B cell (primary cell): ENCODE measurements at regions of chr1 and their contacts with region 1.

Region 1: GRCh38 chr1:160251687-160252526 is 10.4 kb downstream of the DCAF8 start:
- DNase-seq: peak; percentile 73
- ATAC-seq: peak; percentile 95
- H3K4me3 ChIP-seq: no peak overlapping the region
- H3K4me3 Mint-ChIP-seq: no peak overlapping the region
- H3K27ac ChIP-seq: peak overlapping the region in 1 of 2 donors; percentile 3
- H3K27ac Mint-ChIP-seq: no peak overlapping the region
- H3K4me1 ChIP-seq: no peaks in the 10 kb centered on the region
- H3K4me1 Mint-ChIP-seq: peaks cover 10% of the 10 kb centered on the region
- H3K27me3 ChIP-seq: no peaks in the 10 kb centered on the region
- H3K27me3 Mint-ChIP-seq: no peaks in the 10 kb centered on the region
- CTCF ChIP-seq: peak; percentile 85

Region 2: DNA sequence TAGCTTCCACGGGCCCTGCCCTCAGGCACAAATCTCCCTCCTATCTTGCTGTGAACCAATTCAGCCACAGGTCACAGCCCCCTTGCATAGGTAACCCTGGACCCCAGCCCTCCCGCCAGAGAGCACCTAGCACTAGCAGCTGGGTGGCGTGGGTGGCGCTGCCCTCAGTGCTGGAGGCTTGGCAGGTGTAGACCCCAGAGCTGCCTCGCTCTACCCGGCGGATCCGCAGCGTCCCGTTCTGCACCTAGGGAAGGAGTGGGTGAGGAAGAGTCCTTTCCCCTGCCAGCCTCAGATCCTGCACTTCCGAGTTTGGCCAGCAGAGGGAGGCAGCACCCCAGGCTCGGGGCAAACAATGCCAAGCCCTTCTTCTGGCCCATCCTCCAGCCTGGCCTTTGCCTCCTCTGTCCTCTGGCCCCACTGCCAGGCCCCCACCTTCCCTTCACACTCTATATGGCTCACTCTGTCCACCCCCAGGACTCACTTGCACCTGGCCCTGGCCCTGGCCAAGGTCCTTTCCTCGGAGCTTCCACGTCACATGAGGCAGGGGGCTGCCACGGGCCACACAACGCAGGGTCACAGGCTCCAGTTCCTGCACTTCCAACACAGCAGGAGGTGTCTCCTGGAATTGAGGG is 315.5 kb before region 1 on chr1:
- CTCF ChIA-PET with region 1: no interaction called
- POLR2A ChIA-PET with region 1: no interaction called
- intact Hi-C with region 1: loop called (anchors 5 kb)
- DNase-seq: peak; percentile 85
- ATAC-seq: peak; percentile 89
- H3K4me3 ChIP-seq: peak overlapping the region in 1 of 5 experiments; percentile 17
- H3K4me3 Mint-ChIP-seq: peak overlapping the region; percentile 49
- H3K27ac ChIP-seq: no peak overlapping the region
- H3K27ac Mint-ChIP-seq: peak overlapping the region; percentile 61
- H3K4me1 ChIP-seq: peaks cover 37 to 43% of the 10 kb centered on the region in 2 donors
- H3K4me1 Mint-ChIP-seq: peaks cover 47% of the 10 kb centered on the region
- H3K27me3 ChIP-seq: no peaks in the 10 kb centered on the region
- H3K27me3 Mint-ChIP-seq: peaks cover 4% of the 10 kb centered on the region
- CTCF ChIP-seq: peak; percentile 96

Region 3: DNA sequence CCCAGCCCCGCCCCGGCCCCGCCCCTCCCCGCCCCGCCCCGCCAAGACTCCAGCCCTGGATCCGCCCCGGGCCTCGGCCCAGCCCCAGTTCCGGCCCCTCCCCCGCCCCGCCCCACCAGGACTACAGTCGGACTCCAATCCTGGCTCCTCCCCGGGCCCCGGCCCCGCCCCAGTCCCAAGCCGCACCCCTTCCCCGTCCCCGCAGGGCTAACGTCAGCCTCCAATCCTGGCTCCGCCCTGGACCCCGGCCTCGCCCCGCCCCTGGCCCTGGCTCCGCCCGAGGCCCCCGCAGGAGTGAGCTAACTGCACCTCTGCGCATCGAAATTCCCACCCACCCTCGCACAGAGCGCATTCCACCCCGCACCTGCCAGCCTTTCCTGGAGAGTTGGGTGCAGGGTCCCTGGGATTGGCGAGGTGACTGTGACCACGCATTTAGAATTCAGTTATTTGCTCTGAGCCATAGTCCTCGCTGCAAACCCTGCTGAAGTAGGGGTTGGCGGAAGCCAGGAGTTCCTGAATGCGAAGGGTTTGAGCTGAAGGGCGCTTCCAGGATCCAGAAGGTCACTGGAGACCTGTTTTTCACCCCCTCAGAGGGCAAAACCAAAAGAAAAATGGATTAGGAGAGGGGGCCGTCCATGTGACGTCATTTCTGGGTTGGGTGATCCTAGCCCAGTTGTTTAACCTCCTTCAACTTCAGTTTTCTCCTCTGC is 152.9 kb before region 1 on chr1:
- CTCF ChIA-PET with region 1: interaction called, 84 read pairs
- POLR2A ChIA-PET with region 1: interaction called, 7 read pairs
- intact Hi-C with region 1: loop called (anchors 1 kb)
- DNase-seq: peak; percentile 96
- ATAC-seq: peak; percentile 91
- H3K4me3 ChIP-seq: peak overlapping the region; percentile 63 to 79 (median 72)
- H3K4me3 Mint-ChIP-seq: peak overlapping the region; percentile 88
- H3K27ac ChIP-seq: peak overlapping the region; percentile 95 to 99
- H3K27ac Mint-ChIP-seq: peak overlapping the region; percentile 86
- H3K4me1 ChIP-seq: peaks cover 33 to 45% of the 10 kb centered on the region in 2 donors
- H3K4me1 Mint-ChIP-seq: peaks cover 47% of the 10 kb centered on the region
- H3K27me3 ChIP-seq: no peaks in the 10 kb centered on the region
- H3K27me3 Mint-ChIP-seq: no peaks in the 10 kb centered on the region
- CTCF ChIP-seq: no peak

Region 4: DNA sequence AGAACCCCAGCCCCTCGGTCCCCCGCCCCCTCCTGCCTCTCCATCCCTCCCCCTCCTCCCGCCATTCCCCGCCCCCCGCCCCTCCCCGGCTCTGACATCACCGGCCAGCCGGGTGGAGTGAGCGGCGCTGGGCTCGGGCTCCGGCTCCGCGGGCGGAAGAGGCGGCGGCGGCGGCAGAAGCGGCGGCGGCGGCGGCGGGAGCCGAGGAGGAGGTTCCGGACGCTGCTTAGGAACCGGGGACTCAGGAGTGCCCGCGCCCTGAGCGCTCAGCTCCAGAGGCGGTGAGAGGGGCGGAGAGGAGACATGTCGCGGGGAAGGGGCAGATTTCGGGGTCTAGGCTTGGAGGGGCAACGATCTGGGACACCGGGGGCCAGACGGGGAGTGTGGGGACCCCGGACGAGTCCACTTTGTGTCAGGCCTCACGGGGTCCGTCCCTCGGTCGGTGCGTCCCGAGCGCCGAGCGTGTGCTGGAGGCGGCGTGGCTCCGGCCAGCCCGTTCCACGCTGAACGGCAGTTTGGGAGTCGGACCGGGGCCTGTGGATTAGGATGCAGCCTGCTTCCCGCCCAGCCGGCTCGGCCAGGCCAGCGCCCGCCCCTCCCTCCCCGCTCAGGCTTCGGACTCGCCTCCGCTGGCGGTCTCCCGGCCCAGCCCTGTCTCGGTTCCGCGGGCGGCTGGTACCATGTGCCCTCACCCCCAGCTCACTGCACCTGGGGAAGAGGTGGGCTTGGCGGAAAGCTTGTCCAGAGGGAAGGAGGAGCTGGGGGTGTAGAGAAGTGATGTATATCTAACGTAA is 46.5 kb before region 1 on chr1 and contains the start of gene PEA15:
- CTCF ChIA-PET with region 1: interaction called, 50 read pairs
- POLR2A ChIA-PET with region 1: interaction called, 3 read pairs
- intact Hi-C with region 1: no loop called
- DNase-seq: peak; percentile 77
- ATAC-seq: peak; percentile 57
- H3K4me3 ChIP-seq: peak within 1 kb of the TSS; percentile 44 to 99 (median 92)
- H3K4me3 Mint-ChIP-seq: peak within 1 kb of the TSS; percentile 88
- H3K27ac ChIP-seq: peak within 1 kb of the TSS; percentile 98 to 99
- H3K27ac Mint-ChIP-seq: peak within 1 kb of the TSS; percentile 90
- H3K4me1 ChIP-seq: peaks cover 26 to 35% of the 10 kb centered on the region in 2 donors
- H3K4me1 Mint-ChIP-seq: peaks cover 66% of the 10 kb centered on the region
- H3K27me3 ChIP-seq: no peaks in the 10 kb centered on the region
- H3K27me3 Mint-ChIP-seq: no peaks in the 10 kb centered on the region
- CTCF ChIP-seq: no peak
- total RNA-seq, gene PEA15: 76.7 and 81.7 TPM in 2 replicates

Region 5: DNA sequence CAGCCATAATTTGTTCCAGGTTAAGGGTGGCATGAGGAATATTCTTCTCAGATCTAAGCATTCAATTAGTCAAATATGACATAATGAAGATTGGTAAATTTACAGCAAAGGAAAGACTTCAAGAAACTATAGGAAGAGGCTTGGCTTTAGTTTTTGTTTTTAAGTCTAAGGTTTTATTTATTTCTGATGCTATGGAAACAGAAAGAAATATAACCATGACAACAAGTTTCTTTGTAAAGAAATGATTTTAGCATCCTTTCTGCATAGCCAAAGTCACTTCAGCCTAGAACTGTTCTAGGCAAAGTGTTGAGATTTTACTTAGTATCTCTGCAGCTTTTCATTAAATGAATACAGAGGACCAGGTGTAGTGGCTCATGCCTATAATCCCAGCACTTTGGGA is 19.0 kb before region 1 on chr1:
- CTCF ChIA-PET with region 1: interaction called, 30 read pairs
- POLR2A ChIA-PET with region 1: interaction called, 3 read pairs
- intact Hi-C with region 1: no loop called
- DNase-seq: no peak
- ATAC-seq: no peak
- H3K4me3 ChIP-seq: no peak overlapping the region
- H3K4me3 Mint-ChIP-seq: no peak overlapping the region
- H3K27ac ChIP-seq: no peak overlapping the region
- H3K27ac Mint-ChIP-seq: no peak overlapping the region
- H3K4me1 ChIP-seq: peaks cover 8 to 10% of the 10 kb centered on the region in 2 donors
- H3K4me1 Mint-ChIP-seq: peaks cover 11% of the 10 kb centered on the region
- H3K27me3 ChIP-seq: no peaks in the 10 kb centered on the region
- H3K27me3 Mint-ChIP-seq: no peaks in the 10 kb centered on the region
- CTCF ChIP-seq: no peak

Region 6: GRCh38 chr1:160267284-160267991 is 15.5 kb after region 1 on chr1:
- CTCF ChIA-PET with region 1: interaction called, 11 read pairs
- POLR2A ChIA-PET with region 1: interaction called, 8 read pairs
- intact Hi-C with region 1: no loop called
- DNase-seq: no peak
- ATAC-seq: no peak
- H3K4me3 ChIP-seq: no peak overlapping the region
- H3K4me3 Mint-ChIP-seq: no peak overlapping the region
- H3K27ac ChIP-seq: no peak overlapping the region
- H3K27ac Mint-ChIP-seq: no peak overlapping the region
- H3K4me1 ChIP-seq: peaks cover 5 to 8% of the 10 kb centered on the region in 2 donors
- H3K4me1 Mint-ChIP-seq: peaks cover 8% of the 10 kb centered on the region
- H3K27me3 ChIP-seq: no peaks in the 10 kb centered on the region
- H3K27me3 Mint-ChIP-seq: peaks cover 3% of the 10 kb centered on the region
- CTCF ChIP-seq: no peak

Region 7: GRCh38 chr1:160748181-160748877 is 496.4 kb after region 1 on chr1:
- CTCF ChIA-PET with region 1: no interaction called
- POLR2A ChIA-PET with region 1: no interaction called
- intact Hi-C with region 1: no loop called
- DNase-seq: no peak
- ATAC-seq: no peak
- H3K4me3 ChIP-seq: no peak overlapping the region
- H3K4me3 Mint-ChIP-seq: no peak overlapping the region
- H3K27ac ChIP-seq: no peak overlapping the region
- H3K27ac Mint-ChIP-seq: no peak overlapping the region
- H3K4me1 ChIP-seq: peaks cover 8 to 11% of the 10 kb centered on the region in 2 donors
- H3K4me1 Mint-ChIP-seq: peaks cover 30% of the 10 kb centered on the region
- H3K27me3 ChIP-seq: no peaks in the 10 kb centered on the region
- H3K27me3 Mint-ChIP-seq: no peaks in the 10 kb centered on the region
- CTCF ChIP-seq: peak; percentile 30